ENCODE measurements at regions of chr16 and their contacts with region 1.

Region 1: DNA sequence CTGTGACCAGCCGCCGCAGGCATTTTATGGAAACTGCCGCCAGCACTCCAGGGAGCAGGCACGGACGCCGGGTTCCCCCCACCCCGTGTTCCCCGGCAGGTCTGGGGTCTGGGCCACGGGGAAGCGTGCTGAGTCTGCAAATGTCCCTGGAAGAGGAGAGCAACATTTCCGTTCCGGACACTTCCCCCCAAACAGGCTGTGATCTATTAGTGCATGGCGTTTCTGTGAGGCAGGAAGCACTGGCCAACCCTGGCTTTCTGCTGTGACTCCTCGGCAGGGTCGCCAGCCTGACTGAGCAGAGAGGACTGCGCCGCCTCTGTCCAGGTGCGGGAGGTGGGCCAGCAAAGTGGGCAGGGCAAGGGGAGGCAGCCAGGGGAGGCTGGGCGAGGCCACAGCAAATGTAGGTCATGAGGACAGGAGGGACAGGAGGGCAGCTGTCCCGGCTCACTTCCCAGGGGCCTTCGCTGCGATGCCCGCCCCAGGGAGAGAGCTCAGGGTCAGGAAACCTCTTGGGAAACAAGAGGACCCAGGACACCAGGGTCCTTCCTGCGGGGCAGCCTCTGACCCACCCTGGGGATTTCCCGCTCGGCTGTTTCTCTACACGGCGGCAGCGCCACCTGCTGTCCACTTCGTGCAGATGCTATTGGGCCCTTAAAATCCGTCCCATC is 9.5 kb downstream of the FOXF1 start:
- DNase-seq: no peak
- H3K4me3 ChIP-seq: peak overlapping the region in 1 of 2 donors; percentile 33
- H3K27ac ChIP-seq: no peak overlapping the region
- H3K4me1 ChIP-seq: peaks cover 0 to 9% of the 10 kb centered on the region in 2 donors
- H3K27me3 ChIP-seq: peaks cover 13% of the 10 kb centered on the region
- CTCF ChIP-seq: peak; percentile 82 to 90 (median 87)

Region 2: GRCh38 chr16:86072328-86073102 is 447.3 kb before region 1 on chr16:
- intact Hi-C with region 1: loop called (anchors 1 kb)
- DNase-seq: no peak
- H3K4me3 ChIP-seq: no peak overlapping the region
- H3K27ac ChIP-seq: no peak overlapping the region
- H3K4me1 ChIP-seq: no peaks in the 10 kb centered on the region
- H3K27me3 ChIP-seq: no peaks in the 10 kb centered on the region
- CTCF ChIP-seq: peak; percentile 55 to 79 (median 58)

Region 3: DNA sequence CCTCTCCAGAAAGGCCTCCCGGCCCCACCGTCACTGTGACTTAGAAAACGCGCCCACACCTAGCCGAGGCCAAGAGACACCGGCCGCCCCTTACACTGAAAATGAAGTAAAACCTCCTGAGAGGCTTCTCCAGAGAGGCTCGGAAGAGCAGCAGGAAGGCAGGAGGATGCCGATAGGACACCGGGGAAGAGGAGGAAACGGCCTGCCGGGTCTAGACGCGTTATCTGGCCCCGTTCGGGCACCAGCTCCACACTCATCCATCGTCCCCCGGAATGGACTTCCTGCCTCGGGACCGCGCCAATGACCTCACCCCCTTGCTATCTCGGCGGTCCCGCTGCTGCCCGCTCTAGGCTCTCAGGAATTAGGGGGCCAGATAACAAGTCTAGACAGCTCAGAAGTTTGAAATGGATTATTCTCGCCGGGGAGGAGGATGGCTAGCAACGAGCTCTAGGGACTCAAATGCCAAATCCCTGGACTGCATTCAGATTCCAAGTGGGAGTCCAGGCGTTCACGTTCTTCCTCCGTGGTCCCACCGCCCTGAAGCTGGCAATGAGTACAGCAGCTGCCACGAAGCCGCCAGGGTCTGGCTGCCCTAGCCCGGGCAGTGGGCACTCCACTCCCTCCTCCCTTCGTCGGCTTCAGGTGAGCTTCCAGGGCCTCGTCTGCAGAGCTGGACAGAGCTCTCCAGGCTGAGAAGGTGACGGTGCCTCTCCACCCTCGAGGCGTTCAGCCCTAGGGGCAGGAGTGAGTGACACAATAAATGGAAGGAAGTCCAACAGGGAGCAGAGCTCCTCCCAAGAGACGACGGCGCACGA is 409.5 kb after region 1 on chr16:
- intact Hi-C with region 1: no loop called
- DNase-seq: peak in 1 of 2 donors; percentile 82
- H3K4me3 ChIP-seq: peak overlapping the region; percentile 20 to 45
- H3K27ac ChIP-seq: peak overlapping the region; percentile 30 to 74
- H3K4me1 ChIP-seq: peaks cover 0 to 28% of the 10 kb centered on the region in 2 donors
- H3K27me3 ChIP-seq: no peaks in the 10 kb centered on the region
- CTCF ChIP-seq: no peak